GM18951 (cell line): ENCODE measurements at regions of chr17 and their contacts with region 1.

Region 1: DNA sequence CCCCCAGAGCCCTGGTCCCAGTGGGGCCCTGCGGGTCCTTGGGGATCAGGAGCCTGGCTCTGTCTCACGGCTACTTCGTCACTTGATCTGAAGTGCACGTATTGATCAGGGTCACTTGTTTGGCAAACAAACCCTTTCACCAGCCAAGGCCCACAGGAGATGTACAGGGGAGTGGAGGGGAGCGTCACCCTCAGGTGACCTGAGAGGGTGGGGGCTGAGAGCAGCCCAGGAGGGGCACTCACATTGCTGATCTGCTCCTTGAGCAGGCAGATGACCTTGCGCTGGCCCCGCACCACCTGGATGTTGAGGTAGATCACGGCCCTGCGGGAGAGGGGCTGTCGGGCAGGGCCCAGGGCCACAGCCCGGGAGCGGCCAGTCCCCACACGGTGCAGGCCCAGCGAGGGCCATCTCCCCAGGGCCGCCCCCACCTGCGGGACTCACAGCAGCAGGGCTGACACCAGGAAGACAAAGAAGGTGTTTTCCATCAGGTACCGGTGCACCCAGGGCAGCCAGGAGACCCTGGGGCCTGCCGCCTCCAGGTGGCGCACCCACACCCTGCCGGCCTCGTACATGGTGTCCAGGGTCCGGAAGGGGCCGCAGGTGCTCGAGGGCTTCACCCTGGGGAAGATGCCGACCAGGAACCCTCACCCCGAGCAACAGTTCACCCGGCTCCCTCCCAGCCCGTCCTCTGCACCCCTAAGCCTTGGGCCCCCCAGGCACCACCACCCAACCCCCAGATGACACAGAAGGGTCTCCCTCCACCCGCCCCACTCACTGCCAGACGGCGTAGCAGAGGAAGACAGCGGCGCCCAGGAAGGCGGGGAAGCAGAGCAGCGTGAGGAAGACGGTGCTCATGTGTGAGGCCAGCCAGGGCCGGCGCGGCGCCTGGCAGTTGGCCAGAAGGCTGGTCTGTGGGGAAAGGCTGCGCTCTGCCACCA is 11.3 kb downstream of the TMC6 start:
- POLR2A ChIP-seq: no peak

Region 2: GRCh38 chr17:77821097-77821496 is 296.2 kb before region 1 on chr17:
- in situ Hi-C with region 1: no loop called
- POLR2A ChIP-seq: no peak

Region 3: DNA sequence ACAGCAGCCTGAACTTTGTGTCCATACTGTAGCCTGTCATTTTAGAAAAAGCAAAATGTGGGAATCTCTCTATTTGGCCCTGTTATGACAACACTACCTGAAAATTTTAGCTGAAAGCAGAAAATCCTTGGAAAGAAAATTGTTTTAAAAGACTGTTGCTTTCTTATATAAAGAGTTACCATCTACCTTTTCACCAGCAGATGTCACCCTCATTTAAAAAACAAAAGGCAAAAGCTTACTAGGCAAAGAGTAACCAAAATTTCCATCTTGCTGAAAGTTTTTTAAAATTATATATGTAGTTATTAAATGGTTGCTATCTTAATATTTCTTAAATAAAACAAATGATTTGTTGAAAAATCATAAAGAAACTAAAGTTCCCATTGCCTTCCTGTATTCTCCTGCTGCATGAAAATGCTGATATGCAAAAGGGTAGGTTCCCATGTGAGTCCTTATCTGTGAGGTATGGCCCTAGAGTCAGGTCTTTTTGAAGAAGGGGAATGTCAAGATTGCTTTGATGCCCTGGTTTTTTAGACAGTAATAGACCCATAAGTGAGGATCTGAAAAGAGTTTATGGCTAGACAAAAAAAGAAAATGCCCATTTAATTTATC is 97.8 kb before region 1 on chr17:
- in situ Hi-C with region 1: no loop called
- POLR2A ChIP-seq: no peak

Region 4: DNA sequence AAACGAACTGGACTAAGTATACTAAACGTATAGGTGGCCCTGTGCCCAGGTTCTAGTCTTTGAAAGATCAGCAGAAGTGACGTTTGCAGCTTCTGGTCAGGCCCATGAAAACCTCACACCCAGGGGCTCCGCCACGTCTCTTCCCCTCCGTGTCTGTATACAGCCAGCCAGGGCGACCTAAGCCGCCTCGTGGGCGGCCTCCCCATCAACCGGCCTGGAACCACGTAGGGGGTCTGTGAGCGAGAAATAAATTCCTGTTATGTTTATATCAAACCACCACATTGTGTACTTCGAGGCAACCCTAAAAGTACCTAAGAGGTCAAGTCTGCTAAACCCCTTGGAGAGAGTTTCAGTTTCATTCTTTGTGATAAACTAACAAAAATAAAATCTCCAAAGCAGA is 62.8 kb after region 1 on chr17:
- in situ Hi-C with region 1: loop called (anchors 5 kb)
- POLR2A ChIP-seq: no peak